Activated CD4-positive, alpha-beta memory T cell treated with anti-CD3 and anti-CD28 coated beads, Interleukin-2, amount 10 ng/mL, durations not matched to agents 7 days and 5 days (primary cell): ENCODE measurements at regions of chr20 and their contacts with region 1.

Region 1: GRCh38 chr20:46375771-46376170 is 30.6 kb downstream of the ELMO2 start:
- DNase-seq: no peak
- H3K4me3 Mint-ChIP-seq: no peak overlapping the region
- H3K27ac Mint-ChIP-seq: peak overlapping the region; percentile 14
- H3K4me1 Mint-ChIP-seq: no peaks in the 10 kb centered on the region
- H3K27me3 Mint-ChIP-seq: no peaks in the 10 kb centered on the region

Region 2: DNA sequence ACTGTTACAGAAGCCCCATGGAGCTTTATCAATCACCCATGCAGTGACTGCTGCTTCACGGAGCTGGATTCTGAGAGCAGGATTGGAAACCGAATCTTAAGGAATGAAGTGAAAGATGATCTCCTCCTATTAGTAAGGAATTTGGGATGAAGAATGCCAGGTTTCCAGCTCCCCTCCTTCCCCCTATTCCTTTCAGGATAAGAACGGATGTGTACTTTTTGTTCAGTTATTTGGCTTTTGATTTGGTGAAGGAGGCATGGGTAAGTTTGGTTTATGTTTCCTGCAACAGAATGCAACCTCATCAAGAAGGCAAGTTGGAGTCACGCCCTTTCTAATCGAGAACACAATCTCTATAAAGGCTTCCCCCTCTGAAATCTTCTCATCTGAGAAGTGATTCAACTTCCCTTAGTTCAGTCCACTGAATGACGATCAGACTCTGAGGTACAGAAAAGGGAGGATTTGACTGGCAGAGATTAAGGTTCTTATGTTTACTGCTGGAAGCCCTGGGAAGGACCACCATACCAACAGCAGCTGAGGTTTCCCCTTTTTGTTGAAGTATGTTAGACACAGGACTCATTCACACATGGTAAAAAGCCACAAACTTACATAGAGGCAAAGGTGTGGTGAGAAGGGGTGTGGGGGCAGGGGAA is 25.2 kb after region 1 on chr20:
- CTCF ChIA-PET with region 1: interaction called, 3 read pairs
- POLR2A ChIA-PET with region 1: interaction called, 11 read pairs
- DNase-seq: peak; percentile 40
- H3K4me3 Mint-ChIP-seq: peak overlapping the region; percentile 69
- H3K27ac Mint-ChIP-seq: peak overlapping the region; percentile 96
- H3K4me1 Mint-ChIP-seq: peaks cover 73% of the 10 kb centered on the region
- H3K27me3 Mint-ChIP-seq: no peaks in the 10 kb centered on the region